HepG2 (cell line): ENCODE measurements at regions of chr16 and their contacts with region 1.

Region 1: DNA sequence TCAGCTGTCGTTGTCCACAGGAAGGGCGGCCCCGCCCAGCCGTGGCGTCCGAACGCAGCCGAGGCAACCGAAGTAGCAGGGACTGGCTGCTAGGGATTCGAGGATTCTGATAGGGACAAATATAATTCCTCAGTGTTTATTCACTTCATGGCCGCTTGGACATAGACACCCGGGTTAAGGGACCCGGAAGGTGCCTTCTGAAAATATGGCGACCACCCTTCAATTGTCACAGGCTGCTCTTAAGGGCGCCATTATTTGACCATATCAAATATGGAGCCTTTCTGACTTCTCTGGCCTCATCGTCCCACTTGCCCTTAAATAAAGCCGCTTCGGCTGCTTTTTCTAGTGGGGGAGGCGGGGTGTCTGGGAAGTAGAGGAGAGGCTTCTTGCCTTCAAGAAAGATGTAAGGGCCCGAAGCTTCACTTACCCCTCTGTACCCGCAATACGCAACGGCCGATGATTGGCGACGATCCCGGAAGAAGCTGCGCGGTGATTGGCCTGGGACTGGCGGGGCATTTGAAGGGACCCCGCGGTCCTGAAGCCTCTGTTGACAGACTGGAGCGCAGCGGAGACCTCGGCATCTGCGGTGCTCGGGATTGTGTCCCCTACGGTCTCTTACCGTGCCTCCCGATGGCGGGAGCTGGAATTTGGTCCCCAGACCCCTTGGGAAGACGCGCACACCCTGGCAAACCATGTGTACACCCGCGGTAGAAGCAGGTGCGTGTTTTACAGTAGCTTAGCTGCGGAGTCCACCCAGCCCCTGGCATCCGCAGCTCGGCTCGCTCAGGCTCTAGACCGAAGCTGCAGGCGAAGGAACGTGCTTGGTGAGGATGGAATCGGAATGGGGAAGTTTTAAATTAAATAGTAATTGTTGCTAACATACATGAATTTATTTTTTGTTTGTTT is at the start of gene ZNF688:
- DNase-seq: peak; percentile 93
- ATAC-seq: peak; percentile 89
- H3K4me3 ChIP-seq: peak within 1 kb of the TSS; percentile 89 to 97 (median 93)
- H3K27ac ChIP-seq: peak within 1 kb of the TSS; percentile 89
- H3K4me1 ChIP-seq: peaks cover 71% of the 10 kb centered on the region
- H3K27me3 ChIP-seq: no peaks in the 10 kb centered on the region
- CTCF ChIP-seq: no peak
- EP300 ChIP-seq: no peak
- POLR2A ChIP-seq: peak; percentile 52 to 74
- RAD21 ChIP-seq: no peak; the same call in 1 of the 2 replicates
- total RNA-seq, gene ZNF688: 5.4 and 5.8 TPM in 2 replicates

Region 2: GRCh38 chr16:30361180-30361579 is 210.8 kb before region 1 on chr16:
- CTCF ChIA-PET with region 1: no interaction called
- POLR2A ChIA-PET with region 1: no interaction called
- in situ Hi-C with region 1: no loop called
- intact Hi-C with region 1: no loop called
- DNase-seq: no peak
- ATAC-seq: no peak
- H3K4me3 ChIP-seq: no peak overlapping the region
- H3K27ac ChIP-seq: no peak overlapping the region
- H3K4me1 ChIP-seq: peaks cover 20% of the 10 kb centered on the region
- H3K27me3 ChIP-seq: no peaks in the 10 kb centered on the region
- CTCF ChIP-seq: no peak
- EP300 ChIP-seq: no peak
- POLR2A ChIP-seq: no peak
- RAD21 ChIP-seq: no peak

Region 3: DNA sequence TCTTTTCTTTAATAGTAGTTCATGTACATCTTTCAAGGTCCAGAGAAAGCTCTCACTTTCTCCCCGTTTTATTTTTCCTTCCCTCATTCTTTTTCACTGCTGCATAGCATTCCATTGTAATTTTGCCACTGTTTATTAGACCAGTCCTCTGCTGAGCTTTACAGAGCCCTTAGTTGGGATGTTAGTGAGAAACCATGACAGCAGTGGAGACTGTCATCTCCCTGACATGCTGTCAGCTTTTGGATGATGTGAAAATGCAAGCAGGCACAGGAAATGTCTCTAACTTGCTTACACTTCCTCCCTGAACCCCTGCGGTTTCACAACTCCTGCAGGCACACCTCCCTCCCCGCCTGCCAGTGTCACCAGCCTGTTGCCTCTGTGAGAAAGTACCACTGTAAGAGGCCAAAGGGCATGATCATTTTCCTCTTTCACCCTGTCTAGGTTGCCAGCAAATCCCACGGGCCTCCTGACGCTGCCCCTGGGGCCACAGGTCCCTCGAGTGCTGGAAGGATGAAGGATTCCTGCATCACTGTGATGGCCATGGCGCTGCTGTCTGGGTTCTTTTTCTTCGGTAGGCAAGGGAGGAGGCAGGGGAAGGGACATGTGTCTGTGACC is 99.5 kb before region 1 on chr16 and contains the start of gene ITGAL:
- CTCF ChIA-PET with region 1: no interaction called
- POLR2A ChIA-PET with region 1: no interaction called
- in situ Hi-C with region 1: no loop called
- intact Hi-C with region 1: no loop called
- DNase-seq: no peak
- ATAC-seq: peak; percentile 38
- H3K4me3 ChIP-seq: peak within 1 kb of the TSS in 1 of 3 experiments; percentile 24; a peak in 1 of 6 replicates
- H3K27ac ChIP-seq: no peak within 1 kb of the TSS
- H3K4me1 ChIP-seq: peaks cover 50% of the 10 kb centered on the region
- H3K27me3 ChIP-seq: peaks cover 3 to 18% of the 10 kb centered on the region in 2 experiments; a peak in 3 of 5 replicates
- CTCF ChIP-seq: no peak
- EP300 ChIP-seq: no peak
- POLR2A ChIP-seq: no peak
- RAD21 ChIP-seq: no peak
- total RNA-seq, gene ITGAL: 0.51 and 0.86 TPM in 2 replicates

Region 4: DNA sequence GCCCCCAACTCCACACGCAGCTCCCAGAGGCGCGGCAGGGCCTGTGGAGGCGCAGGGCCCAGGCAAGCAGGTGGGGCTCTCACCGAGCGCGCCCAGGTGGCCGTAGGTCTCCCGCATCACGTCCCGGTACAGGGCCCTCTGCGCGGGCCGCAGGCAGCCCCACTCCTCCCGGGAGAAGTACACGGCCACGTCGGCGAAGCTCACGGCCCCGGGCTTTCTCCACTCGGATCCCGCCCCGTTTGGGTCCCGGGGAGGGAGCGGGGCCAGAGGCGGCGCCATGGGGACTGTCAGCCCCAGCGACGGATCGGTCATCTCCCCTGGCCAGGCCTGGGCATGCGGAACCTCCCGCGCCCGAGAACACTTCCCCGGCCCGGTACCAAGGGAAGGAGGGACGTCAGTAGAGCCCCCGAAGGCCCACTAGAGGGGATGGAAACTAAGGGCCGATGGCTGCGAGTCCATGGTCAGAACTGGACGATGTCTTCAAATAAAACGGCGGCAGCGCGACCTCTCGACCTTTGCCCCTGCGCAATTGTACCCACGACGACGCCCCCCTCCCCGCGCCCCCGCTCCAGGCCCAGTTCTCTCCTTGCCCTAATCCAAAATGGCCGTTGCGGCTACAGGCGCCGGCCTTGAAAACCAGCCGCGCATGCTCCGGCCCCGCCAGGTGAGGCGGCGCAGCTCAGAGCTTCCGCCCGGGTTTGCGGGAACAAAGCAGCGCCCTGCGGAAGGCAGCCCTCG is 37.4 kb before region 1 on chr16 and contains the start of gene ZNF747:
- CTCF ChIA-PET with region 1: no interaction called
- POLR2A ChIA-PET with region 1: interaction called, 34 read pairs
- in situ Hi-C with region 1: no loop called
- intact Hi-C with region 1: loop called (anchors 1 kb)
- DNase-seq: peak; percentile 92
- ATAC-seq: peak; percentile 84
- H3K4me3 ChIP-seq: peak within 1 kb of the TSS; percentile 75 to 93 (median 81)
- H3K27ac ChIP-seq: peak within 1 kb of the TSS; percentile 85
- H3K4me1 ChIP-seq: peaks cover 68% of the 10 kb centered on the region
- H3K27me3 ChIP-seq: no peaks in the 10 kb centered on the region; a peak in 1 of 5 replicates
- CTCF ChIP-seq: peak; percentile 47
- EP300 ChIP-seq: peak; percentile 22 to 47; a peak in 2 of 4 replicates
- POLR2A ChIP-seq: peak; percentile 72 to 87
- RAD21 ChIP-seq: no peak; the same call in none of the 2 replicates
- total RNA-seq, gene ZNF747: 8.8 and 10.2 TPM in 2 replicates

Region 5: DNA sequence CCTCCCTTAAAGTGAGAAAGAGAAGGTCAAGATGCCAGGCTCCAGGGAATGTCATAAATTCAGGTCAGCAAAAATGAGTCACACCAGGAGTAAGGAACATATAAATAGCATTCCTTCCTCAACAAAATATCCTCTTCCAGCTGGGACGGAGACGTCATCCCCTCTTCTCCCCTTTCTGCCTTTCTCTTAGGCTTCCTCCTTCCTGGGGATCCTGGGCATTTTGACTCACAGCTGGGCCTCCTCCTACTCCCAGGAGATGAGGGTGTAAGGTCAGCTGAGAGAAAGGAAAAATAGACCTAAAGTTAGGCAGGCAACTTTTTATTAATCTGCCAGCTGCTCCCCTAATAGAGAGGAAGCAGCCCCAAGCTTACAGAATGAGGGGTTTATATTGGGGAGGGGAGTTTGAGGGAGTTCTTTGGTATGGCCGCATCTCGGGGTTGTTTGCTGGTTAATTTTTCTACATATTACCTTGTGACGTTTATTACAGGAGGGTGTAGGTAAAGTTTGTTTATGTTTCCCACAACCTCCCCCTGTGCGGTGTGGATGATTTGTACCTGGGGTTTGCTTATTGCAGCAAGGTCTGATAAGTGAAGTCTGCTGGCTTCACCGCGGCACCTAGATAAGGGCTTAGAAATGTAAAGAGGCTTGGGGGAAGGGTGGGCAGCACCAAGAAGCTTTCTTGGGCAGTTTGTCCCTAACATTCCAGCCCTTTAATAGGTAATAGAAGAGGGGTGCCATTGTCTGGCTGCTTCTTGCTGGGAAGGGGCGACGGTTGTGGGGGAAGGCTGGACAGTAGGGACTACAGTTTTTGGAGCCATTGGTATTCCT is 30.2 kb before region 1 on chr16:
- CTCF ChIA-PET with region 1: no interaction called
- POLR2A ChIA-PET with region 1: interaction called, 3 read pairs
- in situ Hi-C with region 1: no loop called
- intact Hi-C with region 1: loop called (anchors 1 kb)
- DNase-seq: peak; percentile 47
- ATAC-seq: peak; percentile 43
- H3K4me3 ChIP-seq: peak overlapping the region; percentile 48 to 63 (median 58)
- H3K27ac ChIP-seq: peak overlapping the region; percentile 62
- H3K4me1 ChIP-seq: peaks cover 72% of the 10 kb centered on the region
- H3K27me3 ChIP-seq: no peaks in the 10 kb centered on the region
- CTCF ChIP-seq: no peak
- EP300 ChIP-seq: no peak; a peak in 1 of 4 replicates
- POLR2A ChIP-seq: 0 out of 4 replicates have a peak, but pooled peaks of 1 of the 2 experiments have one; percentile 15
- RAD21 ChIP-seq: no peak

Region 6: GRCh38 chr16:30602616-30603277 is 30.8 kb after region 1 on chr16:
- CTCF ChIA-PET with region 1: no interaction called
- POLR2A ChIA-PET with region 1: interaction called, 10 read pairs
- in situ Hi-C with region 1: no loop called
- intact Hi-C with region 1: loop called (anchors 2 kb)
- DNase-seq: no peak
- ATAC-seq: no peak
- H3K4me3 ChIP-seq: no peak overlapping the region
- H3K27ac ChIP-seq: no peak overlapping the region
- H3K4me1 ChIP-seq: peaks cover 27% of the 10 kb centered on the region
- H3K27me3 ChIP-seq: no peaks in the 10 kb centered on the region
- CTCF ChIP-seq: no peak
- EP300 ChIP-seq: no peak
- POLR2A ChIP-seq: 0 out of 4 replicates have a peak, but pooled peaks of 1 of the 2 experiments have one; percentile 29
- RAD21 ChIP-seq: no peak

Region 7: DNA sequence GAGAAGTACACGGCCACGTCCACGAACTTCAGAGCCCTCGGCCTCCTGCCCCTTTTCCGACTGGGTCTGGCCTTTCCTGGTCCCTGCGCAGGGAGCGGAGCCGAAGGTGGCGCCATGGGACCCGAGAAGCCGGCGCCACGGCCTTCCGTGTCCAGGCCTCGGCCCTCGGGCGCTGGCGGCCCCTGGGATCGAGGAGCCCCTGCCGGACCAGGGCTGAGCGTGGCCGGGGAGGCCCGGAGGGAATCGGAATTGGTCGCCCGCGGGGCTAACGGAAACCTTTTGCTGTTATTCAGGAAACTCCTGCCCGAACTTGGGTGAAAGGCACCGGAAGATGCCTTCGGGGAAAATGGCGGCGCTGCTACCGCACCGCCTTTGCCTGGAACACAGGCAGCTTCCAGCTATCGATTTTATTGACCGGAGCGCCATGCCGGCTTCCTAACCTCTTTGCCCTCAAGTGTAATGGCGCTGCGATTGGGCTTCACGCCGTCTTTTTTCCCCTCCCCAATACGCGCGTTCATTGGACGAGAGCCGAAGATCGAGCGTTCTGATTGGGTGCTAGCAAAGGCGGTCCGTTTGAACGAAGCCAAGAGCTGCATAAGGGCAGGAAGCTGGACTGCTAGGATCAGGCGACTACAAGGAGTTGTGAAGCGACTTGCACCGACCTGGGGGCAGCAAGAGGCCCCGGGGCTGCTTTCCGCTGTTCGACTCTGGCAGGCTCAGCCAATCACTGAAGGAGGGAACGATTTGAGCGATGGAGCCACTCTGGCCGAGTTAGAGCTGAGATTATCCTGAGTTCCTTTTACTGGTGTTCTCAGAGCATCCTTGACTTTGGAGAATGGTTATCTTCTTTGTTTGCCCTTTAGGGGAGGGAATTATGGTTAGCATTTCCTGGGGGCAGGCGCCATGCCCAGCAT is 38.2 kb after region 1 on chr16 and contains the start of gene ZNF689:
- CTCF ChIA-PET with region 1: no interaction called
- POLR2A ChIA-PET with region 1: interaction called, 34 read pairs
- in situ Hi-C with region 1: no loop called
- intact Hi-C with region 1: loop called (anchors 1 kb)
- DNase-seq: peak; percentile 98
- ATAC-seq: peak; percentile 92
- H3K4me3 ChIP-seq: peak within 1 kb of the TSS; percentile 80 to 96 (median 92)
- H3K27ac ChIP-seq: peak within 1 kb of the TSS; percentile 92
- H3K4me1 ChIP-seq: peaks cover 37% of the 10 kb centered on the region
- H3K27me3 ChIP-seq: no peaks in the 10 kb centered on the region; a peak in 1 of 5 replicates
- CTCF ChIP-seq: peak; percentile 21; the same call in 1 of the 2 replicates
- EP300 ChIP-seq: peak; percentile 26 to 33; a peak in 1 of 4 replicates
- POLR2A ChIP-seq: peak; percentile 84 to 96
- RAD21 ChIP-seq: no peak; the same call in 1 of the 2 replicates
- total RNA-seq, gene ZNF689: 19.5 and 22.7 TPM in 2 replicates

Region 8: GRCh38 chr16:30621765-30622164 is 49.8 kb after region 1 on chr16:
- CTCF ChIA-PET with region 1: no interaction called
- POLR2A ChIA-PET with region 1: no interaction called
- in situ Hi-C with region 1: loop called (anchors 5 kb)
- intact Hi-C with region 1: no loop called
- DNase-seq: no peak
- ATAC-seq: no peak
- H3K4me3 ChIP-seq: no peak overlapping the region
- H3K27ac ChIP-seq: no peak overlapping the region
- H3K4me1 ChIP-seq: peaks cover 76% of the 10 kb centered on the region
- H3K27me3 ChIP-seq: peaks cover 0 to 19% of the 10 kb centered on the region in 2 experiments; a peak in 3 of 5 replicates
- CTCF ChIP-seq: no peak
- EP300 ChIP-seq: no peak
- POLR2A ChIP-seq: no peak
- RAD21 ChIP-seq: no peak

Region 9: GRCh38 chr16:30657866-30658730 is 86.2 kb after region 1 on chr16 and contains the start of gene FBRS:
- CTCF ChIA-PET with region 1: no interaction called
- POLR2A ChIA-PET with region 1: interaction called, 11 read pairs
- in situ Hi-C with region 1: no loop called
- intact Hi-C with region 1: no loop called
- DNase-seq: peak; percentile 100
- ATAC-seq: peak; percentile 85
- H3K4me3 ChIP-seq: peak within 1 kb of the TSS; percentile 78 to 89 (median 82)
- H3K27ac ChIP-seq: peak within 1 kb of the TSS; percentile 93
- H3K4me1 ChIP-seq: peaks cover 36% of the 10 kb centered on the region
- H3K27me3 ChIP-seq: no peaks in the 10 kb centered on the region; a peak in 1 of 5 replicates
- CTCF ChIP-seq: peak; percentile 97
- EP300 ChIP-seq: peak in 1 of 2 experiments; percentile 22; a peak in 2 of 4 replicates
- POLR2A ChIP-seq: peak; percentile 76 to 86
- RAD21 ChIP-seq: peak; percentile 97
- total RNA-seq, gene FBRS: 10.1 and 16.2 TPM in 2 replicates